Ascending aorta (tissue), 2 donors: ENCODE measurements at regions of chr10 and their contacts with region 1.

Region 1: GRCh38 chr10:28302638-28303488 is at the start of gene MPP7:
- DNase-seq: peak; percentile 93 to 99
- H3K4me3 ChIP-seq: peak within 1 kb of the TSS; percentile 81 to 90
- H3K27ac ChIP-seq: peak within 1 kb of the TSS; percentile 94 to 96
- H3K4me1 ChIP-seq: peaks cover 0 to 8% of the 10 kb centered on the region in 2 donors
- H3K27me3 ChIP-seq: no peaks in the 10 kb centered on the region
- CTCF ChIP-seq: peak in 2 of 3 experiments; percentile 46 to 55
- total RNA-seq, gene MPP7: 43.9 TPM

Region 2: GRCh38 chr10:27504007-27504807 is 798.7 kb before region 1 on chr10 and contains the start of gene RAB18:
- intact Hi-C with region 1: loop called (anchors 10 kb)
- DNase-seq: peak; percentile 92 to 99
- H3K4me3 ChIP-seq: peak within 1 kb of the TSS; percentile 73 to 96
- H3K27ac ChIP-seq: peak within 1 kb of the TSS; percentile 91 to 93
- H3K4me1 ChIP-seq: peaks cover 4 to 19% of the 10 kb centered on the region in 2 donors
- H3K27me3 ChIP-seq: no peaks in the 10 kb centered on the region
- CTCF ChIP-seq: peak in 1 of 3 experiments; percentile 7
- total RNA-seq, gene RAB18: 8.3 TPM

Region 3: GRCh38 chr10:28250782-28251181 is 52.1 kb before region 1 on chr10:
- intact Hi-C with region 1: loop called (anchors 2 kb)
- DNase-seq: no peak
- H3K4me3 ChIP-seq: no peak overlapping the region
- H3K27ac ChIP-seq: peak overlapping the region; percentile 74 to 77
- H3K4me1 ChIP-seq: peaks cover 0 to 32% of the 10 kb centered on the region in 2 donors
- H3K27me3 ChIP-seq: no peaks in the 10 kb centered on the region
- CTCF ChIP-seq: peak; percentile 58 to 72 (median 62)

Region 4: DNA sequence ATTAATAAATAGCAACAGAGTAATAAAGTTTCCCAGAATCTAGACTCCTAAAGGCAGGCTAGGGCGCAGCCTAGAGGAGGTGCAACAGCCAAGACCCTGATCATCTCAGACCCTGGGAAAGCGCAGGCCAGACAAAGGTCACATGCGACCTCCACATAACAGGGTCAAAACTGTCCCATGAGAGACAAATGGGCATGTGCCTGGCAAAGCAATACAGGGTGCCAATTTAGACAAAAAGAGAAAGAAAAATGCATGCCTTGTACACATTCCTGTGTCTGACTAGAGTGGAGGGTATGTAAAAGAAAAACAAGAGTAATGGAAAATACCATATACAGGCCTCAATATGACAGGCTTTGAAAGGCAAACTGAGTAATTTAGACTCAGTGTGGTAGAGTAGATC is 22.2 kb before region 1 on chr10:
- intact Hi-C with region 1: loop called (anchors 2 kb)
- DNase-seq: peak; percentile 11 to 90
- H3K4me3 ChIP-seq: no peak overlapping the region
- H3K27ac ChIP-seq: peak overlapping the region; percentile 83 to 87
- H3K4me1 ChIP-seq: peaks cover 3 to 65% of the 10 kb centered on the region in 2 donors
- H3K27me3 ChIP-seq: no peaks in the 10 kb centered on the region
- CTCF ChIP-seq: peak in 1 of 3 experiments; percentile 11

Region 5: GRCh38 chr10:28326516-28327490 is 23.9 kb after region 1 on chr10:
- intact Hi-C with region 1: loop called (anchors 1 kb)
- DNase-seq: peak; percentile 46 to 89
- H3K4me3 ChIP-seq: peak overlapping the region in 1 of 2 donors; percentile 25
- H3K27ac ChIP-seq: peak overlapping the region; percentile 73 to 86
- H3K4me1 ChIP-seq: peaks cover 0 to 17% of the 10 kb centered on the region in 2 donors
- H3K27me3 ChIP-seq: no peaks in the 10 kb centered on the region
- CTCF ChIP-seq: no peak

Region 6: DNA sequence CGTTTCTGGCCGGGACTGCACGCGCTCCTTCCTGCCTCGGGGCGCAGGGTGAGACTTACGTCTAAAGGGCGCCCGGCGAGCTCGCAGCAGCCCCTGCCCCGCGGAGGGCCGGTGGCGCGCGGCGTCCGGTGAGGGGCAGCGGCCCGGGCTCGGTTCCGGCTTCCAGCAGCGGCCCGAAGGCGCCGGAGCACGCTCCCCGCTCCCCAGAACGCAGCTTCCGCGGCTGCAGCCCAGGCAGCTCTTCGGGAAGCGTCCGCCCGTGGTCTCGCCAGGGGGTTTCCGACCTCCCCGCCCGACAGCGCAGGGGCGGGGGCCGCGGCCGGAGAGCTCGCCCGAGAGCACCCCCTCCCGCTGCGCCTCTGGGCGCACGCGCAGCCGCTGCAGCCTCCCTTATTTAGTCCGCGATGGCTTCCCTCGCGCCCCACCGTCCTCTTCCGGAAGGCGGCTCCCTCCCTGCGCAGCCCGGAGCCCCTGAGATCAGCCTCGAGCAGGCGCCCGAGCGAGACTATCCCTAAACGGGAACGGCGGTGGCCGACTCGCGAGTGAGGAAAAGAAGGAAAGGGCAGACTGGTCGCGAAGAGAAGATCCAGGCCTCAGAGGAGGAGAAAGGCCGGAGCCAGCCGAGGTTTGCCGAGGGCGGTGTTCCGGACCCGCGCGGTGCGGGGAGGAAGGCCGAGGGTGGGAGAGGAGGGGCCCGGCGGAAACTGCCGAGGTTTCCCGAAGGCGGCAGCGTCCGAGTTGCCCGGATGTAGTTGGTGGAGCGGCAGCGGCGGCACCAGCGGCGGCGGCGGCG is 229.7 kb after region 1 on chr10 and contains the start of gene WAC:
- intact Hi-C with region 1: loop called (anchors 10 kb)
- DNase-seq: peak; percentile 73 to 96
- H3K4me3 ChIP-seq: peak within 1 kb of the TSS; percentile 96 to 98
- H3K27ac ChIP-seq: peak within 1 kb of the TSS; percentile 99 to 100
- H3K4me1 ChIP-seq: peaks cover 0 to 19% of the 10 kb centered on the region in 2 donors
- H3K27me3 ChIP-seq: no peaks in the 10 kb centered on the region
- CTCF ChIP-seq: peak; percentile 22 to 31 (median 25)
- total RNA-seq, gene WAC: 30.5 TPM

Region 7: DNA sequence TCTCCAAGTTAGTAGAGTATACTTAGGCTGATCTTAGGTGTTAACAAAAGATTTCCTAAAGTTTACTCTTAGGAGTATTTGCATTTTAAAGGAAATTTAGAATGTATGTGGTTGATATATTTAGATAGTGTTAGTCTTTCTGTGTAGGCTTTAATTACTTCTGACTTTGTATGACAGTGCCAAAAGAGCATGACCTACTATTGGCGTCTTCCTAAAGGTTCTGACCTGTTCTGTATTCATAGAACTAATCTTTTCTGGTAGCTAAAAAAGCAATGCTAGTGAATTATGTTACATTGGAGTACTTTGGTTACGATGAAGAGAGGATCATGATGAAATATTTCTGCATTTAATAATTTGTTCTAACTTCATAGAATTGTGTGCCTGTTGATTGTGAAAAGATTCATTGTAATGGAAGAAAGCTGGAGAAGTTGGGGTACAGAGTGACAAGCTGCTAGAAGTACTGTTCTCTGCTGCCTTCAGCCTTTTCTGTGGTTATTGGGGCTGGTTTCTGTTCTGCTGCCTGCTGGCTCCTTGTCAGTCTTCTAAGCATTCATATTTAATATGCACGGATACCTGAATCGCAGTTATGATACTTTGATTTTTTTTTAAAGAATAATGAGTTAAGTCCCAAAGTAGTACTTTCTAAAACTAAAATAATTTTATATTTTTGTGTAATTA is 243.2 kb after region 1 on chr10:
- intact Hi-C with region 1: no loop called
- DNase-seq: no peak
- H3K4me3 ChIP-seq: no peak overlapping the region
- H3K27ac ChIP-seq: no peak overlapping the region
- H3K4me1 ChIP-seq: peaks cover 0 to 5% of the 10 kb centered on the region in 2 donors
- H3K27me3 ChIP-seq: no peaks in the 10 kb centered on the region
- CTCF ChIP-seq: no peak